Activated naive CD4-positive, alpha-beta T cell treated with anti-CD3 and anti-CD28 coated beads, Interleukin-2, amount 10 ng/mL, durations not matched to agents 7 days and 5 days (primary cell): ENCODE measurements at regions of chr16 and their contacts with region 1.

Region 1: GRCh38 chr16:75550211-75550662 is 5.8 kb downstream of the TMEM231 start:
- DNase-seq: peak; percentile 57
- H3K4me3 Mint-ChIP-seq: no peak overlapping the region
- H3K27ac Mint-ChIP-seq: no peak overlapping the region
- H3K4me1 Mint-ChIP-seq: peaks cover 19% of the 10 kb centered on the region
- H3K27me3 Mint-ChIP-seq: peaks cover 23% of the 10 kb centered on the region

Region 2: GRCh38 chr16:75519881-75520280 is 30.4 kb before region 1 on chr16:
- CTCF ChIA-PET with region 1: interaction called, 10 read pairs
- DNase-seq: no peak
- H3K4me3 Mint-ChIP-seq: no peak overlapping the region
- H3K27ac Mint-ChIP-seq: no peak overlapping the region
- H3K4me1 Mint-ChIP-seq: peaks cover 12% of the 10 kb centered on the region
- H3K27me3 Mint-ChIP-seq: peaks cover 18% of the 10 kb centered on the region